ENCODE measurements at regions of chr17 and their contacts with region 1.

Region 1: GRCh38 chr17:56325313-56326000 is 172.2 kb downstream of the ANKFN1 start:
- DNase-seq: no peak
- ATAC-seq: no peak
- H3K4me3 ChIP-seq: no peak overlapping the region
- H3K27ac ChIP-seq: no peak overlapping the region
- H3K4me1 ChIP-seq: peaks cover 0 to 5% (median 0%) of the 10 kb centered on the region in 12 donors
- H3K27me3 ChIP-seq: peaks cover 0 to 24% (median 0%) of the 10 kb centered on the region in 9 donors
- CTCF ChIP-seq: no peak
- POLR2A ChIP-seq: no peak

Region 2: GRCh38 chr17:55845385-55845784 is 480.1 kb before region 1 on chr17:
- intact Hi-C with region 1: loop called in 1 of 10 experiments (anchors 10 kb)
- DNase-seq: peak; percentile 27 to 69 (median 49)
- ATAC-seq: peak; percentile 71 to 93 (median 80)
- H3K4me3 ChIP-seq: peak overlapping the region in 9 of 12 donors; percentile 15 to 36 (median 32)
- H3K27ac ChIP-seq: no peak overlapping the region
- H3K4me1 ChIP-seq: peaks cover 0 to 6% (median 0%) of the 10 kb centered on the region in 12 donors
- H3K27me3 ChIP-seq: no peaks in the 10 kb centered on the region
- CTCF ChIP-seq: peak; percentile 33 to 73 (median 56)
- POLR2A ChIP-seq: no peak